ENCODE measurements at regions of chr10 and their contacts with region 1.

Region 1: DNA sequence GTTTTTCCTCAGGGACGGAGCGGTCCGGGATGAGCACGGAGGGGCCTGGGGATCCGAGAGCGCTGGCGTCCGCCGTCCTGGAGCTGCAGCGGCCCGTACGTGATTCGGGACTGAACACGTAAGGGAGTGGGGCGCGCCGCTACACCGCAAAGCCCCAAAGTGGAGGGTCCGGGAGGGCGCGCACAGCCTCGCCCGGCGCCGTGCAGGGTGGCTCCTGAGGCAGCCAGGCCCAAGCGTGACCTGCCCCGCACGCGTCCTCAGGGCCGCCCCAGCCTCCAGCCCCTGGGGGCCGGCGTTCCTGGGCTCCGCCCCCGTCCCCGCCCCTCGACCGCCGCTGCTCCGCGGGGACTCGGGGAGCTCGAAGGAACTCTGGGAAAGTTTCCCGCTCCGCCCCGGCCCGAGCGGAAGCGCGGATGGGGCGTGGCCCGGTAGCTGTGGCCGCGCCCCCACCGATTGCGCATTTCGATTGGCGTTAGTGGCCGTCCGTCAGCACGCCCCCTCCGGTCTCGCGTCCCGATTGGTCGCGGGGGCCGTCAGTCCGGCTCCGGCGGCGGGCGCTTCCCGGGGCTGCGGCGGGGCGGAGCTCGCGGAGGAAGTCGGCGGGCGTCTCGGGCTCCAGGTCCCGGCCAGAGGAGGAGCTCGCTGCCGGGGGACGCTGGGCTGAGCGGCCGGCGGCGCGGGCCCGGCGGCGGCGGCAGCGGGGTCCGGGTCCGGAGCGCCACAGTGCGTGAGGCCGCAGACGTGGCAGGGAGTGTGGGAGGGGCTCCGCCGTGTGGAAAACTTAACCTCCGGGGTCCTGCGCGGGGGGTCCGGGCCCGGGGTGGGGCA is at the starts of genes ANKRD16 and FBH1:
- DNase-seq: peak; percentile 92 to 99
- H3K4me3 ChIP-seq: peak within 1 kb of the TSS; percentile 69 to 98 (median 80)
- H3K27ac ChIP-seq: 0 out of 2 replicates have a peak within 1 kb of the TSS, but pooled peaks have one; percentile 46
- H3K4me1 ChIP-seq: peaks cover 5 to 14% (median 5%) of the 10 kb centered on the region in 4 experiments; a peak in 6 of 7 replicates
- H3K27me3 ChIP-seq: no peaks in the 10 kb centered on the region; a peak in 1 of 7 replicates
- CTCF ChIP-seq: no peak
- EP300 ChIP-seq: no peak
- POLR2A ChIP-seq: peak; percentile 51 to 81
- RAD21 ChIP-seq: no peak
- total RNA-seq, gene ANKRD16: 7.7 and 8.2 TPM in 2 replicates
- total RNA-seq, gene FBH1: 49.0 and 51.8 TPM in 2 replicates

Region 2: GRCh38 chr10:5813287-5814109 is 76.3 kb before region 1 on chr10 and contains the start of gene GDI2:
- CTCF ChIA-PET with region 1: no interaction called
- POLR2A ChIA-PET with region 1: interaction called, 21 read pairs
- DNase-seq: peak; percentile 88 to 96
- H3K4me3 ChIP-seq: peak within 1 kb of the TSS; percentile 90 to 98 (median 94)
- H3K27ac ChIP-seq: peak within 1 kb of the TSS; percentile 90
- H3K4me1 ChIP-seq: peaks cover 0 to 3% (median 0%) of the 10 kb centered on the region in 4 experiments; a peak in 1 of 7 replicates
- H3K27me3 ChIP-seq: no peaks in the 10 kb centered on the region
- CTCF ChIP-seq: no peak
- EP300 ChIP-seq: peak in 1 of 2 experiments; percentile 55; a peak in 1 of 3 replicates
- POLR2A ChIP-seq: peak; percentile 96 to 98
- RAD21 ChIP-seq: no peak; a peak in 1 of 4 replicates
- total RNA-seq, gene GDI2: 368 and 385 TPM in 2 replicates

Region 3: GRCh38 chr10:5873515-5873995 is 16.3 kb before region 1 on chr10:
- CTCF ChIA-PET with region 1: interaction called, 25 read pairs
- POLR2A ChIA-PET with region 1: interaction called, 17 read pairs
- DNase-seq: peak in 1 of 2 experiments; percentile 79
- H3K4me3 ChIP-seq: no peak overlapping the region
- H3K27ac ChIP-seq: no peak overlapping the region
- H3K4me1 ChIP-seq: no peaks in the 10 kb centered on the region; a peak in 1 of 7 replicates
- H3K27me3 ChIP-seq: no peaks in the 10 kb centered on the region
- CTCF ChIP-seq: peak in 2 of 3 experiments; percentile 59 to 73; a peak in 3 of 4 replicates
- EP300 ChIP-seq: no peak
- POLR2A ChIP-seq: no peak
- RAD21 ChIP-seq: peak; percentile 48 to 53

Region 4: DNA sequence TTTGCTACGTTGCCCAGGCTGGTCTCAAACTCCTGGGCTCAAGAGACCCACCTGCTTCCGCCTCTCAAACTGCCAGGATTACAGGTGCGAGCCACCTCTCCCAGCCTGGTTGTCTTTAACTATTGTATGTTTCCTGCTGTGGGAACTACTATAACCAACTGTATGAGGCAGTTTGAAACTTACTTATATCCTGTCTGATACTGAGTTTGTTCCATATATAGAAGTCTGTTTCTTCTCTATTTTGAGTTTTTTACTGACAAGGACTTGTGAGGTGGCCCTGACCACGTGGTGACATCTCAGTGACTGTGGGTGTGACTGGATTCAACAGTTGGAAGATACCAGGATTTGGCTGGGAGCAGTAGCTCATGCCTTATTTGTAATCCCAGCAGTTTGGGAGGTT is 14.4 kb after region 1 on chr10:
- CTCF ChIA-PET with region 1: no interaction called
- POLR2A ChIA-PET with region 1: interaction called, 20 read pairs
- DNase-seq: no peak
- H3K4me3 ChIP-seq: no peak overlapping the region
- H3K27ac ChIP-seq: no peak overlapping the region
- H3K4me1 ChIP-seq: no peaks in the 10 kb centered on the region
- H3K27me3 ChIP-seq: no peaks in the 10 kb centered on the region
- CTCF ChIP-seq: no peak
- EP300 ChIP-seq: no peak
- POLR2A ChIP-seq: no peak
- RAD21 ChIP-seq: no peak

Region 5: GRCh38 chr10:6033954-6034353 is 144.1 kb after region 1 on chr10:
- CTCF ChIA-PET with region 1: no interaction called
- POLR2A ChIA-PET with region 1: no interaction called
- DNase-seq: no peak
- H3K4me3 ChIP-seq: no peak overlapping the region
- H3K27ac ChIP-seq: no peak overlapping the region
- H3K4me1 ChIP-seq: no peaks in the 10 kb centered on the region
- H3K27me3 ChIP-seq: peaks cover 0 to 1% (median 0%) of the 10 kb centered on the region in 4 experiments; a peak in 1 of 7 replicates
- CTCF ChIP-seq: no peak
- EP300 ChIP-seq: no peak
- POLR2A ChIP-seq: no peak
- RAD21 ChIP-seq: no peak